ACHN (cell line): ENCODE measurements at regions of chr1 and their contacts with region 1.

Region 1: DNA sequence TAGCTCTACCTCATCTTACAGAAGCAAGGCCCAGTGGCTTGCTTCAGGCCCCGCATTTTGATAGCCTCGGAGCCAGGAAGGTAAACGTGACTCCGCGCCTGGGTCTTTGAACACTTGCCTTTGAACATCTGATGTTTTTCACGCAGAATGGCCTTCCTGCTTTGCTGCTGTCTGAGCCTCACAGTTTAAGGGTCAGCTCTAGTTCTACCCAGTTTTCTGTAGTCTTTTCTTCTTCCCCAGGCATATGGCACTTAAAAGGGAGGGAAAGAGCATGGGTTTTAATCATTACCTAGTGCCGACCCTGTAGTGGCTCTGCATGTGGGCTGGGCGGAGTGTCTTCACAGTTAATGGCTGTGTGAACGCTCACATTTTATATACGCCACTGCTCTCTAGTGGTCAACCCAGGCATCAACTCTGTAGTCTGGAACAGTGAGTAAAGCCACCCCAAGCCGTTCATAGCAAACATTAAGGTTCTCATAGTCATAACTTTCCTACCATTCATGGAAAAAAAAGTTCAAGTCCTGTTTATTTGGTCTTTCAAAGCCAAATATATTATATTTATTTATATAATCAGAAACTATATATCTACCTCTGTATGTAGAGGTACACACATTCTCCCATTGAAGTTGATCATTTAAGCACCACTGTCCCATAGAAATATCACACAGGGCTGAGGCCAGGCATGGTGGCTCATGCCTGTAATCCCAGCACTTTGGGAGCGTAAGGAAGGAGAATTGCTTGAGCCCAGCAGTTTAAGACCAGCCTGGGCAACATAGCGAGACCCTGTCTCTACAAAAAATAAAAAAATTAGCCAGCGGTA is 78.1 kb downstream of the IER5 start:
- DNase-seq: peak; percentile 81

Region 2: DNA sequence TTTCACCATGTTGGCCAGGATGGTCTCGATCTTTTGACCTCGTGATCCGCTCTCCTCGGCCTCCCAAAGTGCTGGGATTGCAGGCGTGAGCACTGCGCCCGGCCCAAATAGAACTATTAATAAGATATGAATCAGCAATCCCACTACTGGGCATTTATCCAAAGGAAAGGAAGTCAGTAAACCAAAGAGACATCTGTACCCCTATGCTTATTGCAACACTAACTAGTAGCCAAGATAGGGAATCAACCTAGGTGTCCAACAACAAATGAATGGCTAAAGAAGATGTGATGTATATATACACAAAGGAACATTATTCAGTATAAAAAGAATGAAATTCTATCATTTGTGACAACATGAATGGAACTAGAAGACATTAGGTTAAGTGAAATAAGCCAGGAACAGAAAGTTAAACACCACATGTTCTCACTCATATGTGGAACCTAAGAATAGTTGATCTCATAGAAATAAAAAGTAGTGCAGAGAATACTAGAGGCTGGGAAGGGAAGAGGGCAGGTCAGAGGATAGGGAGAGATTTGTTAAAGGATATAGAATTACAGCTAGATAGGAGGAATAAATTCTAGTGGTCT is 485.9 kb before region 1 on chr1:
- in situ Hi-C with region 1: no loop called
- DNase-seq: no peak

Region 3: GRCh38 chr1:180912801-180913565 is 253.6 kb before region 1 on chr1 and contains the start of gene KIAA1614:
- in situ Hi-C with region 1: loop called (anchors 25 kb)
- DNase-seq: peak; percentile 49

Region 4: DNA sequence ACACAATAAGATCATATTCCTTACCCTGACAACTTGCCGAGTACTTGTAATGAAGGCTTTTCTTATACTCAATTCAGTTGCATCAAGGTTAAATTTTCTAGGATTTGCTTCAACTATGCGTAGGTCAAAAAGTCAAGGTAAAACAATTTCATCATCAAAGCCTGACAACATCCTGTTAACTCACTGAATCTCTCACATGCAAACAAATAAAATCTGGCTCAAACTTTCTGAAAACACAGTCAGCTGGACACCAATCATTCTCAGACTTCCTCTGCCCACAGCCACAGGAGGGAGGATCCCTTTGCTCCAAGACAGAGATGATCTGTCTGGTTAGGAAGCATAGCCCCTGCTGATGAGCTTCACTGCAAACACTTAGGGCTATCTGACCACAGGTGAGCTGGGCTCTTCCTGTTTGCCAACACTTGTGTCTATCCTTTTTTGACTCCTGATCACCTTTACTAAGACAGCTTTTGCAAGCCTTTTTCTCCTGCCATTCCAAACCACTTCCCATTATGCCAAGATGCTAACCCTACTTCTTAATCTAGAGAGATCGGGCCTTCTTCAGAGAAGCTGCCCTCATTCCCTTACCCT is 163.9 kb before region 1 on chr1:
- in situ Hi-C with region 1: no loop called
- DNase-seq: no peak

Region 5: GRCh38 chr1:181514298-181515290 is 348.0 kb after region 1 on chr1:
- in situ Hi-C with region 1: no loop called
- DNase-seq: no peak

Region 6: DNA sequence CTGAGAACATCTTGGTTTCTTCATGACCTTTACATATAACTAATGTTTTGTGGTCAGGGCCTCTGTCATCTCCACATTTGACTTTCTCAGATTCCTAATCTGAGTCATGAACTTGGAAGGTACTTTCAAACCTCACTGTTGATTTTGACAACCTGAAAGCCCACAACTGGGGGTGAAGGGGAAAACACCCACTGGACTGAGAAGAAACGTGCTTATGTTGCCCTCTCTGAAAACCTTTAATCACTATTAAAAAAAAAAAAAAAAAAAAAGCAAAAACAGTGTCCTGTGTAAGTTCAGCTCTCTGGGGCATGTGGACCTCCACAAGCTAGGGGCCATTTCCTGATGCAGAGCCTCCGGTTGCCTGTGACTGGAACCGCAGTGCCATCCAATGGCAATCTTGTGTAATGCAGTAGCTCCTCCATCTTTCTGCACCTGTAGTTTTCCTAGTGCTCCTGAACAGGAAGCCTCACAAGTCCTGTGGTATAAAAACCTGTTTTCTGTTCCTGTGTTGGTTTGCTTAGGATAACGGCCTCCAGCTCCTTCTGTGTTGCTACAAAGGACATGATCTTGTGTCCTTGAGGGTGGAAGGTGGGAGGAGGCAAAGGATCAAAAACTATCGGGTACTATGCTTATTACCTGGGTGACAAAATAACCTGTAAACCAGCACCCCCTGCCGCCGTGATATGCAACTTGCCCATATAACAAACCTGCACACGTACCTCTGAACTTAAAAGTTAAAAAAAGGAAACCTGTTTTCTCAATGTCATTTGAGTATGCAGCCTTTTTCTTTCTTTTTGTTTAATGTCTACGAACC is 770.4 kb after region 1 on chr1:
- in situ Hi-C with region 1: no loop called
- DNase-seq: peak; percentile 74